ENCODE measurements at regions of chr1 and their contacts with region 1.

Region 1: GRCh38 chr1:205141236-205142101 is 19.7 kb upstream of the RBBP5 start:
- DNase-seq: peak; percentile 69
- H3K4me3 ChIP-seq: no peak overlapping the region; the same call in 1 of the 2 replicates
- H3K27ac ChIP-seq: no peak overlapping the region
- H3K27me3 ChIP-seq: no peaks in the 10 kb centered on the region
- CTCF ChIP-seq: peak; percentile 84

Region 2: GRCh38 chr1:204975570-204976235 is 165.8 kb before region 1 on chr1:
- CTCF ChIA-PET with region 1: interaction called, 11 read pairs
- POLR2A ChIA-PET with region 1: no interaction called
- DNase-seq: no peak
- H3K4me3 ChIP-seq: no peak overlapping the region
- H3K27ac ChIP-seq: no peak overlapping the region
- H3K27me3 ChIP-seq: peaks cover 7% of the 10 kb centered on the region
- CTCF ChIP-seq: peak; percentile 90

Region 3: DNA sequence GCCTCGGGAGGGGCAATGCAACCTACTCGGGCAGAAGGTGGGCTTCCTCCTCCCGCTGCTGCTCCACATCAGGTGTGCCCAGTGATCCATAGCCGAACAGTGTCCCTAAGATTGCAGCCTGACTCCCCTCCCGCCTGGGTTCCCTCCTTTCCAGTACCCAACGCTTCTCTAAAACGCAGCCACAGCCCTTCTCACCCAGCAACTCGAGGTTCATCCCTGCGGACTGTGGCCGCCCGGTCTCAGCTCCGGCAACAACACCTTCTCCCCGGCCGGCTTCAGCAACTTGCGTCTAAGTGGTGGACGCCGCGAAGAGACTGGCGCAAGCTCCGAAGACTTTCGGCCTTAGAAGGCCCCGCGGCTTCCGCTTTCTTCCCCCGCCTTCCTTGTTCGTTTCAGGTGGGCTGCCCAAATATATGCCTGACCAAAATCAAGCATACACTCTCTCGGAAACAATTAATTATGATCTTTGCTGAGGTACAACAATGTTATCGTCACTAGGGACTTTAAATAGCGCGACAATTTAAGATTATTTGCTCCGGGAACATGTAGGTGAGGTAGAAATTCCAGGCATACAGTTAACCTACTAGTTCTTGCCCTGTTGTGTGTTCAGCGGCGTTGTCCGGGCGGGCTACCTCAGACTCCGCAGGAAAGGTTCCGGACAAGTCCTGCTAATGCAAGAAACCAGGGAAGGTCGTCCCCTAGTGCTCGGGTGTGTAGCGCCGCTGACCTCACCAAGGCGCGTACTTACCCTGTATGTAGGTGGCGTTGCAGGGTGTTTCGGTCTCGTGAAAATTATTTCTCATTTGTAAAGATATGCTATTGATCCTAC is 19.6 kb before region 1 on chr1 and contains the start of gene RBBP5:
- CTCF ChIA-PET with region 1: interaction called, 36 read pairs
- POLR2A ChIA-PET with region 1: interaction called, 9 read pairs
- DNase-seq: peak; percentile 98
- H3K4me3 ChIP-seq: peak within 1 kb of the TSS; percentile 100
- H3K27ac ChIP-seq: peak within 1 kb of the TSS; percentile 78
- H3K27me3 ChIP-seq: no peaks in the 10 kb centered on the region
- CTCF ChIP-seq: peak; percentile 90
- polyA plus RNA-seq, gene RBBP5: 12.0 and 16.0 TPM in 2 replicates

Region 4: DNA sequence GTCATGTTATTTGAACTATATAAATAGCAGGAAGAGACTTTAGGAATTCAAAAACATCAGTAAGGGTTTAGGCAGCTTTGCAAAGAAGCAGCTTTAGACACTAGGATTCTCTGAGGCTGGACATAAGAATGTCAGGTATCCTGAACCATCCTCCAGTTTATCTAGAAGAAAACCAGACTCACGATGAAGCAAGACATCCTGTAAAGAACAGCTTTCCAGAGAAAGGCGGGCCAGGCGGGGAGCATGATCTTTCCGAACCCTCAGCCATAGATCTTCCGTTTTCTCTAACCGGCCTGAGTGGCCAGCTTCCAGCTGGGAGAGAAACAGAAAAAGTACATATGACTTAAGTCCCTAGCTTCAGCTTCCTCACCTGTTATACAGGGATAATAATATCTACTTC is 19.6 kb after region 1 on chr1:
- CTCF ChIA-PET with region 1: interaction called, 23 read pairs
- POLR2A ChIA-PET with region 1: interaction called, 4 read pairs
- DNase-seq: no peak
- H3K4me3 ChIP-seq: no peak overlapping the region
- H3K27ac ChIP-seq: no peak overlapping the region
- H3K27me3 ChIP-seq: no peaks in the 10 kb centered on the region
- CTCF ChIP-seq: no peak

Region 5: DNA sequence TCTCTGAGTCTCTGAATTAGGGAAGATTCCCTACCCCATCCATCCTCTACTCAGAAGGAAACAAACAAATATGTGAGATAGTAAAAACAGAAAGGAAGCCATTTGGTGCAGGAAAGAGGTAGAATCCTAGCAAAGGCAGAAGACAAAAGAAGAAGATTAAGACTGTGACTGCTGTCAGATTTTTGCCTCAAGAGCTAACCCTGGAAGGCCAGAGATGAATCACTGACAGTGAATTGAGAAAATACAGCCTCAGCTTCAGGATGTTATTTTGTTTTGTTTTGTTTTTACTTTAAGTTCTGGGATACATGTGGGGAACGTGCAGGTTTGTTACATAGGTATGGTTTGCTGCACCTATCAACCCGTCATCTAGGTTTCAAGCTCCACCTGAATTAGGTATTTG is 38.4 kb after region 1 on chr1:
- CTCF ChIA-PET with region 1: interaction called, 13 read pairs
- POLR2A ChIA-PET with region 1: no interaction called
- DNase-seq: no peak
- H3K4me3 ChIP-seq: no peak overlapping the region
- H3K27ac ChIP-seq: no peak overlapping the region
- H3K27me3 ChIP-seq: no peaks in the 10 kb centered on the region
- CTCF ChIP-seq: no peak

Region 6: GRCh38 chr1:205227584-205228006 is 86.1 kb after region 1 on chr1 and contains the start of gene TMCC2:
- CTCF ChIA-PET with region 1: interaction called, 26 read pairs
- POLR2A ChIA-PET with region 1: no interaction called
- DNase-seq: peak; percentile 66
- H3K4me3 ChIP-seq: peak within 1 kb of the TSS; percentile 75
- H3K27ac ChIP-seq: peak within 1 kb of the TSS; percentile 11
- H3K27me3 ChIP-seq: peaks cover 2% of the 10 kb centered on the region
- CTCF ChIP-seq: 0 out of 2 replicates have a peak, but pooled peaks have one; percentile 9
- polyA plus RNA-seq, gene TMCC2: 2.3 and 3.0 TPM in 2 replicates

Region 7: GRCh38 chr1:205255941-205256780 is 114.7 kb after region 1 on chr1:
- CTCF ChIA-PET with region 1: interaction called, 62 read pairs
- POLR2A ChIA-PET with region 1: no interaction called
- DNase-seq: peak; percentile 59
- H3K4me3 ChIP-seq: no peak overlapping the region
- H3K27ac ChIP-seq: no peak overlapping the region
- H3K27me3 ChIP-seq: no peaks in the 10 kb centered on the region
- CTCF ChIP-seq: peak; percentile 97

Region 8: GRCh38 chr1:205410581-205411298 is 269.3 kb after region 1 on chr1:
- CTCF ChIA-PET with region 1: no interaction called
- POLR2A ChIA-PET with region 1: no interaction called
- DNase-seq: no peak
- H3K4me3 ChIP-seq: no peak overlapping the region
- H3K27ac ChIP-seq: no peak overlapping the region
- H3K27me3 ChIP-seq: peaks cover 30% of the 10 kb centered on the region
- CTCF ChIP-seq: no peak

Region 9: GRCh38 chr1:206059355-206059915 is 918.0 kb after region 1 on chr1:
- CTCF ChIA-PET with region 1: no interaction called
- POLR2A ChIA-PET with region 1: no interaction called
- DNase-seq: no peak
- H3K4me3 ChIP-seq: no peak overlapping the region
- H3K27ac ChIP-seq: no peak overlapping the region
- H3K27me3 ChIP-seq: peaks cover 15% of the 10 kb centered on the region
- CTCF ChIP-seq: no peak